ENCODE measurements at regions of chr12 and their contacts with region 1.

Region 1: DNA sequence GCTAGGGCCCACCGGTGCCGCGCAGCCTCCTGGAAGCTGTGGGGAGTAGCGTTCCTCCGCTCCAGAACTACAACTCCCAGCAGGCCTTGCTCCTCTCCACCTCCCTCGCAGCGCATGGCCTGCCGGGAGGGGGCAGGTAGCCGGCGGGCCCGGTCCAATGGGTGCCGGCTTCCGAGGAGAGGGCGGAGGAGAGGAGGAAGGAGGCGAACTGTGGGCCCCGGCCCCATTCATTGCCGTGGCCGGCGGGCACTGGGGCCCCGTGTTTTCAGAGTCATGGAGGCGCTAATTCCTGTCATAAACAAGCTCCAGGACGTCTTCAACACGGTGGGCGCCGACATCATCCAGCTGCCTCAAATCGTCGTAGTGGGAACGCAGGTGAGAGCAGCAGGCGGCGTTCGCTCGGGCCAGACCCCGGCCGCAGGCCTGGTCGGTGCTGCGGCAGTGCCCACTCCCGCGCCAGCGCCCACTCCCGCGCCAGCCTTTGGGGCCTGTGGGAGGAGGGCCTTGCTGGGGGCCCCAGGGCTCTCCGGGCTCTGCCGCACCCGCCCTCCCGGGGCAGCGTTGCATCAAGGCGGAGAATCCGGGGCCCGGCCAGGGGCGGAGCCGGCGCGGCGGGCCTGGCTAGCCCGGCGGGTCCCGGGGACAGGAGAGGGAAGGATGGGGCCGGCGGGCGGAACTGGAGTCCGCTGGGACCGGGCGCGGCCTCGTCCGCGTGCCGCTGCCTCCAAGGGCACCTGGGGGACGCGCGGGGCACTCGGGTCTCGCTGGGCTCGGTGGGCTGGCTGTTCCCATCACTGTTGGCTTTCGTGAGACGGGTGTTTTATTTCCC is at the start of gene DNM1L:
- DNase-seq: peak; percentile 96
- H3K4me3 ChIP-seq: peak within 1 kb of the TSS; percentile 30 to 91 (median 74)
- H3K27ac ChIP-seq: peak within 1 kb of the TSS; percentile 29
- H3K4me1 ChIP-seq: peaks cover 11% of the 10 kb centered on the region
- H3K27me3 ChIP-seq: no peaks in the 10 kb centered on the region
- CTCF ChIP-seq: peak in 1 of 2 donors; percentile 21
- POLR2A ChIP-seq: peak; percentile 91
- total RNA-seq, gene DNM1L: 90.1 and 103 TPM in 2 replicates

Region 2: DNA sequence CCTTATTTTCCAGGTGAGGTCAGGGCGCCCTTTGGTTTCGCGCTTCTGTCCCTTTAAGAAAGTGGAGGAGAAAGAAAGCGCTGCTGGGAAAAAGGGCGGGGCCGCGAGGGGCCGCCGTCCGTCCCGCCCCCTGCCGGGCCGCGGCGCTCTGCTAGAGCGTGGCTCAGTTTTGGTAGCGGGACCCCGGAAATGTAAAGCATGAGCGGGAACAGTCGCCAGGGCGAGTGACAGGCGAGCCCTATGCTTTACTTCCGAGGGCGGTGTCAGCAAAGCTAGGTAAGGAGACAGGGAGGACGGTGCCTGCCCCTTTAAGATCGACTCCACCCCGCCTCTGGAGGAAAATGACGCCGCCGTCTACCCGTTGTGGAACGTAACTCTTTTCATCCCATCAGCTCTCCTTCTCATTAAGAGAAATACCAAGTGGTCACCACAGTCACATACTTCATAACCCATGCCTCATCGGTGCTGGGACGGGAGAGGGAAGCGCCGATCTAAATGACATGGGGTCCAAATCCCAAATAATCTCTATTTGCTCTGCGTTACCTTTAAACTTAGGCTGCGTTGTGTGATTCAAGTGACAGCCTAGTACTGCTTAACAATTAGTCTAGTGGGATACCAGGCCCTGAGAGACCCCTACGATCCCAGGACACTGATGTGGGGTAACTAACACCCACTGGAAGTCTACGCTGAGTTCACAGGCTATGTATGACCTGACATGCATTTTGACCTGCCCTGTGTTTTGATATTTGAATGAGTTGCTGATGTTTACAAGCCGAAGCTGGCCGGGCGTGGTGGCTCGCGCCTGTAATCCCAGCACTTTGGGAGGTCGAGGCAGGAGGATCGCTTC is 1020.0 kb before region 1 on chr12 and contains the start of gene ETFBKMT:
- CTCF ChIA-PET with region 1: no interaction called
- POLR2A ChIA-PET with region 1: no interaction called
- dilution Hi-C with region 1: no loop called
- intact Hi-C with region 1: loop called (anchors 10 kb)
- DNase-seq: peak; percentile 89
- H3K4me3 ChIP-seq: peak within 1 kb of the TSS; percentile 75 to 87 (median 81)
- H3K27ac ChIP-seq: peak within 1 kb of the TSS; percentile 87
- H3K4me1 ChIP-seq: peaks cover 4% of the 10 kb centered on the region
- H3K27me3 ChIP-seq: no peaks in the 10 kb centered on the region
- CTCF ChIP-seq: peak; percentile 30 to 38
- POLR2A ChIP-seq: peak; percentile 86
- total RNA-seq, gene ETFBKMT: 2.4 and 3.1 TPM in 2 replicates

Region 3: GRCh38 chr12:32794281-32794680 is 115.0 kb after region 1 on chr12:
- CTCF ChIA-PET with region 1: no interaction called
- POLR2A ChIA-PET with region 1: no interaction called
- dilution Hi-C with region 1: no loop called
- intact Hi-C with region 1: no loop called
- DNase-seq: no peak
- H3K4me3 ChIP-seq: no peak overlapping the region
- H3K27ac ChIP-seq: no peak overlapping the region
- H3K4me1 ChIP-seq: no peaks in the 10 kb centered on the region
- H3K27me3 ChIP-seq: no peaks in the 10 kb centered on the region
- CTCF ChIP-seq: no peak
- POLR2A ChIP-seq: no peak